Heart left ventricle (tissue), 16 donors: ENCODE measurements at regions of chr20 and their contacts with region 1.

Region 1: GRCh38 chr20:26324177-26324576 is 627.5 kb upstream of the ZNF337 start:
- DNase-seq: no peak
- ATAC-seq: no peak
- H3K4me3 ChIP-seq: no peak overlapping the region
- H3K27ac ChIP-seq: no peak overlapping the region
- H3K4me1 ChIP-seq: no peaks in the 10 kb centered on the region
- H3K27me3 ChIP-seq: no peaks in the 10 kb centered on the region
- CTCF ChIP-seq: no peak
- POLR2A ChIP-seq: no peak

Region 2: GRCh38 chr20:26135325-26136110 is 188.7 kb before region 1 on chr20:
- intact Hi-C with region 1: loop called in 1 of 10 experiments (anchors 10 kb)
- DNase-seq: no peak
- ATAC-seq: no peak
- H3K4me3 ChIP-seq: no peak overlapping the region
- H3K27ac ChIP-seq: no peak overlapping the region
- H3K4me1 ChIP-seq: no peaks in the 10 kb centered on the region
- H3K27me3 ChIP-seq: no peaks in the 10 kb centered on the region
- CTCF ChIP-seq: no peak
- POLR2A ChIP-seq: no peak

Region 3: GRCh38 chr20:26295006-26295405 is 29.2 kb before region 1 on chr20:
- intact Hi-C with region 1: no loop called
- DNase-seq: no peak
- ATAC-seq: no peak
- H3K4me3 ChIP-seq: no peak overlapping the region
- H3K27ac ChIP-seq: no peak overlapping the region
- H3K4me1 ChIP-seq: no peaks in the 10 kb centered on the region
- H3K27me3 ChIP-seq: no peaks in the 10 kb centered on the region
- CTCF ChIP-seq: no peak
- POLR2A ChIP-seq: no peak

Region 4: GRCh38 chr20:26347396-26347795 is 23.2 kb after region 1 on chr20:
- intact Hi-C with region 1: no loop called
- DNase-seq: no peak
- ATAC-seq: no peak
- H3K4me3 ChIP-seq: no peak overlapping the region
- H3K27ac ChIP-seq: no peak overlapping the region
- H3K4me1 ChIP-seq: no peaks in the 10 kb centered on the region
- H3K27me3 ChIP-seq: no peaks in the 10 kb centered on the region
- CTCF ChIP-seq: no peak
- POLR2A ChIP-seq: no peak